H1 (cell line): ENCODE measurements at regions of chr11 and their contacts with region 1.

Region 1: DNA sequence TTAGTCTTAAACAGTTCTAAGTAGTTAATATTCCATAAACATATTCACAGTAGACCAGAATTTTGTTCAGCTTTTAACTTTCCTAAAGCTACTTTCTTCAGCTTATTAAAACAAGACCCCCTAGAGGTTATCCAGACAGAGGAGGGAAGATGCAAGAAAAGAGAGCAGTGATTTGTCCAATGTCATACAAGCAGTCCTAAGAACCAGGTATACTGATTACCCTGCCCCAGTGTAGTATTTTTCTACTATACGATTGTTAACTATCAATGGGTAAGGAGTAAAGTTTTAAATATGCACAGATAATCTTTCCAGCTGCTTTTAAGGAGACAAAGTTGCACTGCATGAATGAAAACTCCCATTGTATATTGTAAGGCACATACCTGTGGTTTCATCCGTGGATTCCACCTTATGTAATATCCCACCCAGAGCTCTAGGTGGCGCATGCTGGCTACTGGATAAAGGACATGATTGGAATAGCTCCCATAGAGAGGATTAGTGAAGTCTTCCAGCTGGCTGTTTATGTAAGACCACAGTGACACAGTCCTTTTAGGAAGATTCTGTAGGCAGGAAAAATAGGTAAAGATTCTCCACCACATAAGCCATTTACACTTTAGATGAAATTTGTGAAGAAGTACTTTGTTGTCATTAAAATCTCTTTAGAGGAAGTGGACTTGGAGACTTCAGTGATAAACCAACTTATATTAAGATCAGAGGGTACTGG is 45.6 kb downstream of the CEP57 start:
- DNase-seq: peak; percentile 5 to 55
- H3K4me3 ChIP-seq: no peak overlapping the region
- H3K27ac ChIP-seq: no peak overlapping the region
- H3K4me1 ChIP-seq: no peaks in the 10 kb centered on the region
- H3K27me3 ChIP-seq: no peaks in the 10 kb centered on the region
- CTCF ChIP-seq: peak; percentile 6 to 85 (median 74)
- EP300 ChIP-seq: no peak
- POLR2A ChIP-seq: no peak
- RAD21 ChIP-seq: peak; percentile 86 to 92

Region 2: DNA sequence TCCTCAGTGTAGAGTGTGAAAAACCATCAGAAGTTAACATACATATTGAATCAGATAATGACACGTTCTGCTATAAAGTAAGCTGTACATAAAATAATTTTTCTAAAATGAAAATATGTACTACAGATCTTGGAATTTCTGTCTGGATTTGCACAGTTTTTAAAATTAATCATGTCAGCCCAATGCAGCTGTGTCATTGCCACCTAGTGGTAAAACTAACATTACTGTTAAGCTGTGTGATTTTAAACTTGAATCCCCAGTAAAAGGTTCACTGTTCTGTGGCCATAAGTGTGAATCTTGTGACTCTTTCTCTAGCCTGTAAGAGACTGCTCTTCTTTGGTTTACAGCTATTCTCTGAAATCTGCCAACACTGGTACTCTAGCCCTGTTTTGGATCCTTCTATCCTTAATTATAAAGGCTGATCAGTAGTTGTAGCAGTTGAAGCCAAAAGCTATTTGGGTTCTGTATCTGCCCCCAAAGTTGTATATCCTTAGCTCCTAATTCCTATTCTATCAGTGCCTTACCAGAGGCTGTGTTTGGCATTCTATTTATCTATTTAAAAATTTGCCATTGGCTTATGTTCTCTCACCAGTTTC is 557.9 kb after region 1 on chr11:
- CTCF ChIA-PET with region 1: interaction called, 13 read pairs
- POLR2A ChIA-PET with region 1: no interaction called
- DNase-seq: no peak
- H3K4me3 ChIP-seq: no peak overlapping the region
- H3K27ac ChIP-seq: no peak overlapping the region
- H3K4me1 ChIP-seq: peaks cover 0 to 2% (median under 1%) of the 10 kb centered on the region in 4 experiments; a peak in 2 of 7 replicates
- H3K27me3 ChIP-seq: no peaks in the 10 kb centered on the region
- CTCF ChIP-seq: peak in 2 of 3 experiments; percentile 40 to 59; a peak in 2 of 4 replicates
- EP300 ChIP-seq: no peak
- POLR2A ChIP-seq: no peak
- RAD21 ChIP-seq: peak; percentile 70 to 73

Region 3: GRCh38 chr11:96424693-96425092 is 588.8 kb after region 1 on chr11:
- CTCF ChIA-PET with region 1: interaction called, 25 read pairs
- POLR2A ChIA-PET with region 1: interaction called, 3 read pairs
- DNase-seq: no peak
- H3K4me3 ChIP-seq: no peak overlapping the region
- H3K27ac ChIP-seq: no peak overlapping the region
- H3K4me1 ChIP-seq: peaks cover 0 to 2% (median 0%) of the 10 kb centered on the region in 4 experiments; a peak in 2 of 7 replicates
- H3K27me3 ChIP-seq: no peaks in the 10 kb centered on the region
- CTCF ChIP-seq: no peak
- EP300 ChIP-seq: no peak
- POLR2A ChIP-seq: no peak
- RAD21 ChIP-seq: no peak